Common myeloid progenitor, CD34-positive (primary cell): ENCODE measurements at regions of chr11 and their contacts with region 1.

Region 1: DNA sequence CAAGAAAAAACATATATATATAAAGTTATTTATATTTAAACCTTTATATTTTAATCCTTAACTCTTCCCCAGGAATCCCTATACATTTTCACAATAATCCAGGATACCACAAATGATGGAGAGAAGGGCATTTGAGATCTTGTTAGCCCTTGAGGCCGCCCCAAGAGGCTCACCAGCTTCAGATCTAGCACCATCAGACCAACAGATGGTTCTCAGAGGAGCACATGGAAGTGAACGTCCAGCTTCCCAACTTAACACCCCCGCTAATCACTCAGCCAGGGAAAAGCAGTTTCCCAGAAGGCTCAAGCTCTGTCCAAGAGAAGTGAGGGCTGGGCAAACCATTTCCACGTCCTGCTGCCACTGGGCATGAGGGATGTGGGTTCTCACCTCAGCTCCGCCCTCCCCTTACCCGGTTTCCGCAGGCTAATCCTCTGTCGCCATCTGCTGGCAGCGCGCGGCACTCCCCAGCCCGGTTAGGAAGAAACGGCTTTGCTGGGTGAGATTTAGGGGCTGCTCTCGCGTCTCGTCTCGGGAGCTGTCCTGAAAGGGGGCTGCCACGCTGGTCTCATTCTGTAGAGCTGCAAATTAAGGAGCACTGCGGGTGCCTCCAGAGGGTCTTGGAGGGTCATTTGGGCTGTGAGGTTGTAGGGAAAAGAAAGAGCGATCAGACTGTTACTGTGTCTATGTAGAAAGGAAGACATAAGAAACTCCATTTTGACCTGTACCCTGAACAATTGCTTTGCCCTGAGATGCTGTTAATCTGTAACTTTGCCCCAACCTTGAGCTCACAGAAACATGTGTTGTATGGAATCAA is 6.8 kb upstream of the FAM111A start:
- DNase-seq: peak; percentile 82 to 92 (median 90)
- H3K4me3 ChIP-seq: peak overlapping the region in 3 of 7 experiments; percentile 33 to 60 (median 53)
- H3K27ac ChIP-seq: no peak overlapping the region
- H3K4me1 ChIP-seq: peaks cover 0 to 9% (median 5%) of the 10 kb centered on the region in 4 experiments
- H3K27me3 ChIP-seq: no peaks in the 10 kb centered on the region

Region 2: GRCh38 chr11:59097113-59097708 is 38.6 kb before region 1 on chr11:
- CTCF ChIA-PET with region 1: interaction called, 26 read pairs
- POLR2A ChIA-PET with region 1: no interaction called
- DNase-seq: peak; percentile 77 to 88 (median 84)
- H3K4me3 ChIP-seq: no peak overlapping the region
- H3K27ac ChIP-seq: no peak overlapping the region
- H3K4me1 ChIP-seq: peaks cover 0 to 6% (median 4%) of the 10 kb centered on the region in 4 experiments
- H3K27me3 ChIP-seq: no peaks in the 10 kb centered on the region

Region 3: GRCh38 chr11:59106363-59107336 is 29.2 kb before region 1 on chr11 and contains the start of gene FAM111B:
- CTCF ChIA-PET with region 1: interaction called, 44 read pairs
- POLR2A ChIA-PET with region 1: no interaction called
- DNase-seq: peak; percentile 61 to 91 (median 90)
- H3K4me3 ChIP-seq: peak within 1 kb of the TSS; percentile 40 to 90 (median 70)
- H3K27ac ChIP-seq: no peak within 1 kb of the TSS
- H3K4me1 ChIP-seq: peaks cover under 1 to 22% (median 14%) of the 10 kb centered on the region in 4 experiments
- H3K27me3 ChIP-seq: no peaks in the 10 kb centered on the region

Region 4: DNA sequence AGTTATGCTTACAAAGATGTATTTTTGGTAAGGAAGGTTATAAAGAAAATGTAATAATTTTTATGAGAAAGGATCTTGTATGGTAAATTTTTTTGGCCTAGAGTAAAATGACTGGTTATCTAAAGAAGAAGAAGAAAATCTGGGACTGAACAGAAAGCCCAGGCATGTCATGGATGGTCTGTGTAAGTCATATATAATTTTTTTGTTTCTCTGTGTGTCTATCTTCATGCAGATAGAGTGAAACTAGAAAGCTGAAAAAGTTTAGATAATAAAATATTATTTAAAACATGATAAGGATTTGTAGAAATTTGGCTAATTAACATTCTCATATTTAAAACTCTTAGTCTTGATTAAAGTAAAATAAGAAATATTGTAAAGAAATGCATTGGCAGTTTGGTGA is 104.5 kb after region 1 on chr11:
- CTCF ChIA-PET with region 1: no interaction called
- POLR2A ChIA-PET with region 1: no interaction called
- DNase-seq: no peak
- H3K4me3 ChIP-seq: no peak overlapping the region
- H3K27ac ChIP-seq: no peak overlapping the region
- H3K4me1 ChIP-seq: no peaks in the 10 kb centered on the region
- H3K27me3 ChIP-seq: no peaks in the 10 kb centered on the region

Region 5: DNA sequence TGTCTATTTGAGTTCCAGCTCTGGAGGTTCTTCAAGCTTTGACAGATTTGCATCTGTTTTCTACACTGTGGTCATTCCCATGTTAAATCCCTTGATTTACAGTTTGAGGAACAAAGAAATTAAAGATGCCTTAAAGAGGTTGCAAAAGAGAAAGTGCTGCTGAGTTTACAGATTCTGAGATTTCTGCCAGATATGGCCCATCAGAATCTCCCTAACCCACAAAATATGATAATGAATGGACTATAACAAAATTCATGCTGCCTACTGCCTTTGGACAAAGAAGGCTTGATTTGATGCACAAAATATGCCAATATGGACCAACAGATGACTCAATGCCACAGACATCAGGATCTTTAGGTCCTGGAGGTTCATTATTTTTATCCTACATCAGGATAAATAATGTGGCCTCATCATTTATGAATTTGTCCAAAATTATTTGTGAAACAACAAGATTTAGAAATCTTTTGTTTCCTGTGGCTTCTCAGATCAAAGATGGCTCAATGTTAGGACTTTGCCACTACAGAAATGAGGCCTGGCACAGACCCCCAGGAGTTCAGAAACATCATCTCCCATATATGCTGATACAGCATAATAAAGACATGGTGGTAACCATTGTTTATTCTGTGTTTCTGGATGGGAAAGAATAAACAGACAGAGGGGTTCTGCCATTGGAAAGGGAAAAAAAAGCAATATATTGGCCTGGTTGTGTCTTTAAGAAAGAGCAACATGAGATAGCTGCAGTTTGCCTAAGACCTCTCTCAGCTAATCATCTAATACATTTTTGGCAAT is 229.6 kb after region 1 on chr11:
- CTCF ChIA-PET with region 1: no interaction called
- POLR2A ChIA-PET with region 1: no interaction called
- DNase-seq: peak in 2 of 3 donors; percentile 35 to 46
- H3K4me3 ChIP-seq: no peak overlapping the region
- H3K27ac ChIP-seq: no peak overlapping the region
- H3K4me1 ChIP-seq: peaks cover 0 to 22% (median 16%) of the 10 kb centered on the region in 4 experiments
- H3K27me3 ChIP-seq: no peaks in the 10 kb centered on the region